ENCODE measurements at regions of chr3 and their contacts with region 1.

Region 1: GRCh38 chr3:48918388-48919214 is at the start of gene ARIH2:
- DNase-seq: peak; percentile 95
- ATAC-seq: peak; percentile 95
- H3K4me3 ChIP-seq: peak within 1 kb of the TSS; percentile 95
- H3K27ac ChIP-seq: peak within 1 kb of the TSS; percentile 71
- H3K4me1 ChIP-seq: peaks cover 13% of the 10 kb centered on the region
- H3K27me3 ChIP-seq: no peaks in the 10 kb centered on the region
- CTCF ChIP-seq: peak; percentile 14; the same call in 1 of the 2 replicates
- total RNA-seq, gene ARIH2: 136 and 156 TPM in 2 replicates

Region 2: GRCh38 chr3:48847504-48848423 is 70.8 kb before region 1 on chr3 and contains the start of gene PRKAR2A:
- CTCF ChIA-PET with region 1: no interaction called
- POLR2A ChIA-PET with region 1: interaction called, 11 read pairs
- intact Hi-C with region 1: loop called (anchors 2 kb)
- DNase-seq: peak; percentile 93
- ATAC-seq: peak; percentile 87
- H3K4me3 ChIP-seq: peak within 1 kb of the TSS; percentile 76
- H3K27ac ChIP-seq: peak within 1 kb of the TSS; percentile 69
- H3K4me1 ChIP-seq: peaks cover 7% of the 10 kb centered on the region
- H3K27me3 ChIP-seq: no peaks in the 10 kb centered on the region
- CTCF ChIP-seq: no peak
- total RNA-seq, gene PRKAR2A: 68.1 and 117 TPM in 2 replicates

Region 3: DNA sequence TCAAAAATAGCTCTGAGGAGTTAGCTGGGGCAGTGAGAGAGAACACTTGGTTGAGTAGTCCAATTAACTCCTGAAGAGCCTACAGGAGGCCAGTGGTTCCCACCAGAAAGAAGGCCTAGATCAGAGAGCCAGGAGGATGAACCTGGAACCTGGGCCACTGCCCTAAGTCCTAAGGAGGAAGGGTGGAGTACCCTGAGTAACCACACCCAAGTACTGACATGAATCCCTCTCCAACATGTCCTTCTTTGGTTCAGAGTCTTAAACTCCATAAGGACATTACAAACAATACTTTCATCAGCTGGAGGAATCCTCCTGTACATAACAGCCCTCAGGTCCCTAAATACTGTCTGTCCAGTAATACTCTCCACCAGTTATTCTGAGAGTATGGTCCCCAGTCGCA is 384.0 kb after region 1 on chr3:
- CTCF ChIA-PET with region 1: no interaction called
- POLR2A ChIA-PET with region 1: no interaction called
- intact Hi-C with region 1: no loop called
- DNase-seq: no peak
- ATAC-seq: no peak
- H3K4me3 ChIP-seq: no peak overlapping the region
- H3K27ac ChIP-seq: no peak overlapping the region
- H3K4me1 ChIP-seq: 0 out of 2 replicates have a peak, but pooled peaks cover 3% of the 10 kb centered on the region
- H3K27me3 ChIP-seq: no peaks in the 10 kb centered on the region
- CTCF ChIP-seq: no peak